ENCODE measurements at regions of chr7 and their contacts with region 1.

Region 1: DNA sequence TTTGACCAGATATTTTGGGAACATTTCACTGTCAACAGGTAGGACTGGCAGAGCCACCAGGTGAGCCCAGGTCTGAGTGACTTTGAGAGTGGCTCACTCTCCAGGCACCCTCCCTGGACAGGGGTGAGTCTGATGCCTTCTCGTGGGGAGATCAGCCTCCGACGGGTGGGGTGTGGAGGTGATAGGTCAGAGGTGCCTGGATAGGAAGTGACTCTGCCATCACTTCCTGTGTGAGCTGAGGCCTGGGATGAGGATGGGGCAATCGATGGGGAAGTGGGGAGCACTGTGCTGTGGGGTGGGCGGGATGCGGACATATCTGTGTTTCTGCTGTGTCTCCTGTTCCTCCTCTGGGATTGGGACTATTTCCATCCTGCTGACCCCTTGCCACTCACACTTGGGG is 34.6 kb downstream of the IFT22 start:
- DNase-seq: no peak
- H3K4me3 ChIP-seq: no peak overlapping the region
- H3K27ac ChIP-seq: no peak overlapping the region
- H3K4me1 ChIP-seq: peaks cover 0 to 5% (median 5%) of the 10 kb centered on the region in 4 donors
- H3K27me3 ChIP-seq: peaks cover 0 to 31% (median 9%) of the 10 kb centered on the region in 3 donors
- CTCF ChIP-seq: no peak
- EP300 ChIP-seq: no peak
- POLR2A ChIP-seq: no peak

Region 2: DNA sequence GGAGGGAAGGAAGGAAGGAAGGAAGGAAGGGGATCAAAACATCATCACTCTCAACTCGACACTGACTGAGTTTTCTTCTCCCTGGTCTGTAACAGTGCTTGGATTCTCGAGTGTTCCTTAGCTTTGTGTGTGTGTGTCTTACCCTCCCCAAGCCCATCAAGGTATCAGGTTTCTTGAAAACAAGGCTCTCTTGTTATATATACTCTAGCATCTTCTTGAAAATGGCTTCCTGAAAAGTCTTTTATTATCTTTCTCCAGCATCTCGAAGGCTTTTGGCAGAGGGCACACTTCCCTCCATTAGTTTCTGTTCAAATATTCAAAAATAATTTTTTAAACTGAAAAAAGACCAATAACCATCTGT is 146.7 kb before region 1 on chr7:
- intact Hi-C with region 1: loop called (anchors 5 kb)
- DNase-seq: no peak
- H3K4me3 ChIP-seq: no peak overlapping the region
- H3K27ac ChIP-seq: no peak overlapping the region
- H3K4me1 ChIP-seq: peaks cover 5 to 28% (median 21%) of the 10 kb centered on the region in 4 donors
- H3K27me3 ChIP-seq: peaks cover 0 to 19% (median 0%) of the 10 kb centered on the region in 3 donors
- CTCF ChIP-seq: no peak
- EP300 ChIP-seq: no peak
- POLR2A ChIP-seq: no peak

Measured in stomach (tissue), 19 donors.